Caco-2 (cell line): ENCODE measurements at regions of chr4 and their contacts with region 1.

Region 1: GRCh38 chr4:87409420-87409939 is 12.9 kb upstream of the NUDT9 start:
- DNase-seq: peak; percentile 46 to 53
- H3K4me3 ChIP-seq: no peak overlapping the region
- H3K4me3 Mint-ChIP-seq: peak overlapping the region; percentile 49
- H3K27ac Mint-ChIP-seq: peak overlapping the region; percentile 43
- H3K4me1 ChIP-seq: peaks cover 30% of the 10 kb centered on the region
- H3K4me1 Mint-ChIP-seq: peaks cover 23% of the 10 kb centered on the region
- H3K27me3 ChIP-seq: no peaks in the 10 kb centered on the region
- H3K27me3 Mint-ChIP-seq: no peaks in the 10 kb centered on the region
- CTCF ChIP-seq: no peak

Region 2: DNA sequence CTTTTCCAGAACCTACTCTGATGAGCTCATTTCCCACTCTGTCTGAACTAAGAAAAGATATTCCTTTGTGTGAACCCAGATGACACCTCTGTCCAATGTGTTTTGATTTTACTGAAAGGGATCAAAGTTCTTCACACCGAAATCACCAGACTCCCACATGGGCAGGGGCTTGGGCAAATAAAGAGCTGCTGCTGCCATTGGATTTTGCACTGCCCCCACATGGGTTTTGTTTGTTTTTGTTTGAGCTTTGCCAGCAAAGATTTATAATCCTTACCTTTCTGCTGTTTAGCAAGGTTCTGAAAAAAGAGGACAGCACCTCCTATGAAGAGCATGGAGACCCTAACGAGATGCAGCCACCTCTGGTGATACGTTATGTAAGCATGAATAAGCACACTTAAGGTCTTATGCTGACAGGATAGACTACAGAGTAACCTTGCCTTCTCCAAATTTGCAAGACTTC is 131.1 kb before region 1 on chr4:
- CTCF ChIA-PET with region 1: no interaction called
- POLR2A ChIA-PET with region 1: no interaction called
- intact Hi-C with region 1: no loop called
- DNase-seq: peak in 1 of 2 experiments; percentile 10
- H3K4me3 ChIP-seq: no peak overlapping the region
- H3K4me3 Mint-ChIP-seq: no peak overlapping the region
- H3K27ac Mint-ChIP-seq: no peak overlapping the region
- H3K4me1 ChIP-seq: peaks cover 5% of the 10 kb centered on the region
- H3K4me1 Mint-ChIP-seq: peaks cover 9% of the 10 kb centered on the region
- H3K27me3 ChIP-seq: no peaks in the 10 kb centered on the region
- H3K27me3 Mint-ChIP-seq: no peaks in the 10 kb centered on the region
- CTCF ChIP-seq: no peak

Region 3: DNA sequence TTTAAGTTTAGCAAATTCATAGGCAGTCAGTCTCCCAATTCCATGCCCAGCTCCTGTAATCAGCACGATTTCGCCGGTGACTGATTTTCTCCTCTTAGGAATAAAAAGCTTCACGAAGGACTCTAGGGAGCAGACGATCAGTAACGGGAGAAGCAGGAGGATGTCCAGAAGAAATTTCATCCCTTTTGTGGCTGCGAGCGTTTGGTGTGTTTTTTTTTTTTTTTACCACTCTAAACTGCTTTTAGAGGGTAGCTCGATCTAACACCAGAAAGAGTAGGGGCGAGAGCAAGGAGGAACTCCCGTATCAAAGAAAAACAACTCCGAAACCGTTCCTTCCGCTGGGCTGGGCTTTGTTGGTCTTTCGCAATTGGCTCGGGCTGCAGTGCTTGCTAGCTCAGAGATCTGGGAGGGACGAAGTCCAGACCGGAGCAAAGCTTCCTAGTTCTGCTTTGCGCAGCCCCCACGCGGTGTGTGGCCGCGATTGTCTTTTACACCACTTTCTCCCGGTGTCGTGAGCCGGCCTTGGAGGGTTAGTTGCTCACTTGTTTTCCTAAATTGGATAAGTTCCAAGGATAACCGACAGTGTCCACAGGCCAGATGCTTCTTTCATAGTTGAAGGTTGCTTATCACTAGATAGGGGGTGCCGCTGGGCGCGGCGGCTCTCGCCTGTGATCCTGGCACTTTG is 18.4 kb before region 1 on chr4 and contains the start of gene HSD17B11:
- CTCF ChIA-PET with region 1: no interaction called
- POLR2A ChIA-PET with region 1: no interaction called
- intact Hi-C with region 1: loop called (anchors 1 kb)
- DNase-seq: peak; percentile 85 to 90
- H3K4me3 ChIP-seq: peak within 1 kb of the TSS; percentile 53
- H3K4me3 Mint-ChIP-seq: peak within 1 kb of the TSS; percentile 87
- H3K27ac Mint-ChIP-seq: peak within 1 kb of the TSS; percentile 92
- H3K4me1 ChIP-seq: peaks cover 11% of the 10 kb centered on the region; the same call in 1 of the 2 replicates
- H3K4me1 Mint-ChIP-seq: peaks cover 18% of the 10 kb centered on the region
- H3K27me3 ChIP-seq: no peaks in the 10 kb centered on the region
- H3K27me3 Mint-ChIP-seq: no peaks in the 10 kb centered on the region
- CTCF ChIP-seq: no peak
- total RNA-seq, gene HSD17B11: 39.3 and 42.8 TPM in 2 replicates

Region 4: GRCh38 chr4:87422104-87423052 is 12.9 kb after region 1 on chr4 and contains the start of gene NUDT9:
- CTCF ChIA-PET with region 1: no interaction called
- POLR2A ChIA-PET with region 1: no interaction called
- intact Hi-C with region 1: loop called (anchors 1 kb)
- DNase-seq: peak; percentile 93 to 95
- H3K4me3 ChIP-seq: peak within 1 kb of the TSS; percentile 79
- H3K4me3 Mint-ChIP-seq: peak within 1 kb of the TSS; percentile 94
- H3K27ac Mint-ChIP-seq: peak within 1 kb of the TSS; percentile 96
- H3K4me1 ChIP-seq: peaks cover 17% of the 10 kb centered on the region
- H3K4me1 Mint-ChIP-seq: peaks cover 13% of the 10 kb centered on the region
- H3K27me3 ChIP-seq: no peaks in the 10 kb centered on the region
- H3K27me3 Mint-ChIP-seq: no peaks in the 10 kb centered on the region
- CTCF ChIP-seq: no peak
- total RNA-seq, gene NUDT9: 27.9 and 28.7 TPM in 2 replicates